H1 (cell line): ENCODE measurements at regions of chr6 and their contacts with region 1.

Region 1: GRCh38 chr6:33771146-33772081 is 17.5 kb downstream of the LEMD2 start:
- DNase-seq: peak; percentile 86 to 87
- H3K4me3 ChIP-seq: peak overlapping the region in 3 of 4 experiments; percentile 4 to 16 (median 14); a peak in 3 of 8 replicates
- H3K27ac ChIP-seq: no peak overlapping the region
- H3K4me1 ChIP-seq: peaks cover 10 to 32% (median 21%) of the 10 kb centered on the region in 4 experiments
- H3K27me3 ChIP-seq: no peaks in the 10 kb centered on the region
- CTCF ChIP-seq: peak in 2 of 3 experiments; percentile 76 to 95; a peak in 3 of 4 replicates
- EP300 ChIP-seq: no peak
- POLR2A ChIP-seq: 0 out of 3 replicates have a peak, but pooled peaks of 1 of the 2 experiments have one; percentile 45
- RAD21 ChIP-seq: peak; percentile 86 to 91

Region 2: GRCh38 chr6:33700391-33701050 is 70.9 kb before region 1 on chr6:
- CTCF ChIA-PET with region 1: interaction called, 10 read pairs
- POLR2A ChIA-PET with region 1: interaction called, 3 read pairs
- DNase-seq: peak; percentile 63 to 84
- H3K4me3 ChIP-seq: no peak overlapping the region
- H3K27ac ChIP-seq: no peak overlapping the region
- H3K4me1 ChIP-seq: peaks cover 0 to 5% (median 0%) of the 10 kb centered on the region in 4 experiments; a peak in 2 of 7 replicates
- H3K27me3 ChIP-seq: no peaks in the 10 kb centered on the region
- CTCF ChIP-seq: peak in 2 of 3 experiments; percentile 92 to 98; a peak in 3 of 4 replicates
- EP300 ChIP-seq: no peak
- POLR2A ChIP-seq: no peak
- RAD21 ChIP-seq: peak; percentile 80 to 82

Region 3: DNA sequence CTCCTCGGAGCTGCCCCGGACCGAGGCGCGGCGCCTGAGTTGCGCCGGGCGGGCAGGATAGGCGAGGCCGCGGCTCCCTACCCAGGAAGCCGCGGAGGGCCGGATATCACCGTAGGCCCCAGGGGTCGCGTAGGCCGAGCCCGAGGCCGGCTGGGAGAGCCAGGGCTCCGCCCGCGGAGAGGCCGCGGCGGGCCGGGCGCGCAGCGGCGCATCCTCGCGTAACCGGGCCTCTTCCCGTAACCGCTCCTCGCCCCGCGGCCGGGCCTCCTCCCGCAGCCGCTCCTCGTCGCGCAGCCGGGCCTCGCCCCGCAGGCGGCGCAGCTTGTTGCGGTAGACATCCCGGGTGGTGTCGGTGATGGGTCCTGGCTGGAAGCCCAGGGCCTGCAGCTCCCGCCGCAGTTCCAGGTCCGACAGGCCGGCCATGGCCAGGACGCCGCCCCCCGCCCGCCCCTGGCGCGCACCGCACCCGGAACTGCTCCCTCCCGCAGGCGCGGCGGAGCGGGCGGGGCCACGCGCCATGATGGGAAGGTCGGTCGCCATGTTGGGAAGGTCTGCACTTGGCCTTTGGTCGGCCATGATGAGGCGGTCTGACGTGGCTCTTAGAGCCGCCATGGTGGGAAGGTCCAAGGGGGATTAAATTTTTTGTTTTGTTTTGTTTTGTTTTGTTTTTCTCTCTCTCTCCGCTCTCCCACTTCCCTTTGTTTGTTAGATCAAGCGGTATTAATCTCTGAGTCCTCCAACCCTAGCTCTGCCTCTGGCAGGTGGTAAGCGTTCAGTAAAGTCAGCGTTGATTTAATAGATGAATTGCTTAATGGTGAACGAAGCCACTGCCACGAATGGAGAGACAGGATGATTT is 17.5 kb after region 1 on chr6 and contains the start of gene LEMD2:
- CTCF ChIA-PET with region 1: interaction called, 71 read pairs
- POLR2A ChIA-PET with region 1: interaction called, 101 read pairs
- DNase-seq: peak; percentile 71 to 95
- H3K4me3 ChIP-seq: peak within 1 kb of the TSS; percentile 59 to 94 (median 74)
- H3K27ac ChIP-seq: peak within 1 kb of the TSS; percentile 76
- H3K4me1 ChIP-seq: peaks cover 18 to 63% (median 30%) of the 10 kb centered on the region in 4 experiments
- H3K27me3 ChIP-seq: no peaks in the 10 kb centered on the region
- CTCF ChIP-seq: 0 out of 4 replicates have a peak, but pooled peaks of 1 of the 3 experiments have one; percentile 2
- EP300 ChIP-seq: no peak
- POLR2A ChIP-seq: peak in 1 of 2 experiments; percentile 52; a peak in 2 of 3 replicates
- RAD21 ChIP-seq: no peak; a peak in 1 of 4 replicates
- total RNA-seq, gene LEMD2: 54.1 and 57.3 TPM in 2 replicates

Region 4: GRCh38 chr6:33812669-33813068 is 41.3 kb after region 1 on chr6:
- CTCF ChIA-PET with region 1: interaction called, 49 read pairs
- POLR2A ChIA-PET with region 1: interaction called, 7 read pairs
- DNase-seq: peak; percentile 71 to 91
- H3K4me3 ChIP-seq: peak overlapping the region in 1 of 4 experiments; percentile 19; a peak in 1 of 8 replicates
- H3K27ac ChIP-seq: no peak overlapping the region
- H3K4me1 ChIP-seq: peaks cover 30 to 54% (median 38%) of the 10 kb centered on the region in 4 experiments
- H3K27me3 ChIP-seq: no peaks in the 10 kb centered on the region
- CTCF ChIP-seq: peak in 2 of 3 experiments; percentile 36 to 47; a peak in 3 of 4 replicates
- EP300 ChIP-seq: no peak
- POLR2A ChIP-seq: no peak
- RAD21 ChIP-seq: peak; percentile 13 to 38; a peak in 2 of 4 replicates

Region 5: GRCh38 chr6:33851959-33852358 is 80.5 kb after region 1 on chr6:
- CTCF ChIA-PET with region 1: interaction called, 87 read pairs
- POLR2A ChIA-PET with region 1: interaction called, 4 read pairs
- DNase-seq: peak; percentile 66 to 71
- H3K4me3 ChIP-seq: no peak overlapping the region
- H3K27ac ChIP-seq: no peak overlapping the region
- H3K4me1 ChIP-seq: peaks cover 0 to 5% (median 2%) of the 10 kb centered on the region in 4 experiments; a peak in 4 of 7 replicates
- H3K27me3 ChIP-seq: no peaks in the 10 kb centered on the region
- CTCF ChIP-seq: peak in 2 of 3 experiments; percentile 84 to 93; a peak in 3 of 4 replicates
- EP300 ChIP-seq: no peak
- POLR2A ChIP-seq: no peak
- RAD21 ChIP-seq: peak; percentile 88 to 96

Region 6: DNA sequence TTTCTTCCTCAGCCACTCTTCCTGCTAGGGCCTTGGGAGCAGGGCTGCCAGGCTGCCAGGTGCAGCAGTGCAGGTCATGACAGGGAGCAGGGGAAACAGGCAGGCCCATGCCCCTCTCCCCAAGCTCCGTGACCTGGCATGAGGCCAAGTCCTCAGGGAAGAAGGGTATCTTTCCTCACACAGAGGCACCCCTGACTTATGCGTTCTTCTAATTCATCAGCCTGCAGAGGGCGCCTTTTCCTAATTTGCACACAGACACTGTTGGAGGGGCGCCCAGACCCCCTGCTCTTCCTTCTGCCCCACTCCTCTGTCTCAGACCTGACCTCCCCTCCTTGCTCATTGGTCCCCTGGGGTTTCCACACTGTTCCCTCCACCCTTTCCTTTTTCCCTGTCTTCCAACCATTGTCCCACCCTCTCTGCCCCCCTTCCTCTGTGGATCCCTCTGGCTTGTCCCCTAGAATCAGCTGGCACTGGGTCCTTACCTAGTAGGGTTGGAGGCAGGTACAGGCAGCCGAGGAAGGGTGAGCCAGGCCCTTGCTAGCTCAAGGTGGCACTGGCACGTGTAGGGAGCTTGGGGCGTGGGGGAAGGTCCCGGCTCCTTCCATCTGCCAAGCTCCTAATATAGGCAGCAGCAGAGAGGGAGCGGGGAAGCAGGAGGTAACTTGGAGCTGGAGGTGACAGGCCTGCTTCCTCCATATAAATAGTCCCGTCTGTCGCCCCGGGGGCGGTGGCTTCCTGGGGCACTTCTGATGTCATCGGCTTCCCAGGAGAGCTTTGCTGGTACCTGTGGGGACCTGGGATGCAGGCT is 187.3 kb after region 1 on chr6:
- CTCF ChIA-PET with region 1: interaction called, 47 read pairs
- POLR2A ChIA-PET with region 1: no interaction called
- DNase-seq: peak in 1 of 2 experiments; percentile 82
- H3K4me3 ChIP-seq: no peak overlapping the region
- H3K27ac ChIP-seq: no peak overlapping the region
- H3K4me1 ChIP-seq: peaks cover 8 to 12% (median 10%) of the 10 kb centered on the region in 4 experiments
- H3K27me3 ChIP-seq: no peaks in the 10 kb centered on the region; a peak in 1 of 7 replicates
- CTCF ChIP-seq: peak in 2 of 3 experiments; percentile 70 to 79; a peak in 3 of 4 replicates
- EP300 ChIP-seq: no peak
- POLR2A ChIP-seq: no peak
- RAD21 ChIP-seq: peak; percentile 56 to 72